ENCODE measurements at regions of chr6 and their contacts with region 1.

Region 1: GRCh38 chr6:73515204-73515655 is 5.6 kb downstream of the EEF1A1 start:
- DNase-seq: no peak
- ATAC-seq: peak; percentile 53
- H3K4me3 Mint-ChIP-seq: peak overlapping the region; percentile 72
- H3K27ac Mint-ChIP-seq: peak overlapping the region; percentile 80
- H3K4me1 Mint-ChIP-seq: peaks cover 70% of the 10 kb centered on the region
- H3K27me3 Mint-ChIP-seq: no peaks in the 10 kb centered on the region
- CTCF ChIP-seq: no peak

Region 2: DNA sequence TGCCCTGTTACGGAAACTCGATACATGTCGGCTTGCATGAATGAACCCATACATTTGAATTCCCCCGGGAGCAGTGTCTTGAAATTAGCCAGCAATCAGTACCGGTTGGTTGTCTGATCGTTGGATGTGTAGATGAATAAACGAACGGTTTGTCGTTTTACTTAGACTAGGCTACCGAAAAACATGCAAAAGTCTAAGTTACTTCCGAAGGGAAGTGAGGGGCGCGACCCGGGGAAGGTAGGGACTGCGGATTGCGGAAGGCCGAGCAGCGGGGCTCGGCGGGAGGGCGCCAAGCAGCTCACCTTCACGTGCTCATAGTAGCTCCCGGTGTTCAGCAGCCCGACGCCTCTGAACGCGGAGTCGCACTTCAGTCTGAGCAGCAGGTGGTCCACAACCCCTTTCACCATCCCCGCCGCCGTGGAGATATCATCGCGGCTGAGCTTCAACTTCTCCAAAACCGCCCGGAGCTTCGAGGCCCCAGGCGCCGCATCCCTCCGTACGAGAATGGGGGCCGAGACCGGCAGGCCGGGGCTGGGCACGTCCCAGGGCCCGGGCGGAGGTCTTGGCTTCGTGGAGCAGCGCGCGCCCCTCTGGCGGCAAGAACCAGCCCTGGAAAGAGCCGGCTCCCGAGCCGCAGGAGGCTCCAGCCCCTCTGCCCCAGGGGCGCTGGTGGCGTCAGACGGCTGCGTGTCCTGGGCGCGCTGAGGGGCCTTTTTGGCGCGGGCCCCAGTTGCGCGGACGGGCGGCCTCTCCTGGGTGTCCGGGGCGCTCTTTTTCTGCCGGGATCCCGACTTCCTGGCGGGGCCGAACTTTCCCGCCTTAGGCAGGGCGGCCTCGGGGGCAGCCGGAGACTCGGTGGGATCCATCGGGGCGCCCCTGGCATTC is 63.8 kb before region 1 on chr6:
- CTCF ChIA-PET with region 1: no interaction called
- POLR2A ChIA-PET with region 1: interaction called, 72 read pairs
- intact Hi-C with region 1: loop called (anchors 1 kb)
- DNase-seq: peak; percentile 54
- ATAC-seq: peak; percentile 59
- H3K4me3 Mint-ChIP-seq: peak overlapping the region; percentile 93
- H3K27ac Mint-ChIP-seq: peak overlapping the region; percentile 91
- H3K4me1 Mint-ChIP-seq: peaks cover 22% of the 10 kb centered on the region
- H3K27me3 Mint-ChIP-seq: no peaks in the 10 kb centered on the region
- CTCF ChIP-seq: no peak

Region 3: GRCh38 chr6:73481969-73482368 is 33.3 kb before region 1 on chr6:
- CTCF ChIA-PET with region 1: no interaction called
- POLR2A ChIA-PET with region 1: interaction called, 11 read pairs
- intact Hi-C with region 1: no loop called
- DNase-seq: no peak
- ATAC-seq: no peak
- H3K4me3 Mint-ChIP-seq: no peak overlapping the region
- H3K27ac Mint-ChIP-seq: no peak overlapping the region
- H3K4me1 Mint-ChIP-seq: no peaks in the 10 kb centered on the region
- H3K27me3 Mint-ChIP-seq: no peaks in the 10 kb centered on the region
- CTCF ChIP-seq: no peak

Region 4: GRCh38 chr6:73580247-73581149 is 65.3 kb after region 1 on chr6:
- CTCF ChIA-PET with region 1: interaction called, 14 read pairs
- POLR2A ChIA-PET with region 1: interaction called, 301 read pairs
- intact Hi-C with region 1: no loop called
- DNase-seq: peak; percentile 54
- ATAC-seq: peak; percentile 74
- H3K4me3 Mint-ChIP-seq: peak overlapping the region; percentile 80
- H3K27ac Mint-ChIP-seq: peak overlapping the region; percentile 98
- H3K4me1 Mint-ChIP-seq: peaks cover 48% of the 10 kb centered on the region
- H3K27me3 Mint-ChIP-seq: no peaks in the 10 kb centered on the region
- CTCF ChIP-seq: no peak

Region 5: DNA sequence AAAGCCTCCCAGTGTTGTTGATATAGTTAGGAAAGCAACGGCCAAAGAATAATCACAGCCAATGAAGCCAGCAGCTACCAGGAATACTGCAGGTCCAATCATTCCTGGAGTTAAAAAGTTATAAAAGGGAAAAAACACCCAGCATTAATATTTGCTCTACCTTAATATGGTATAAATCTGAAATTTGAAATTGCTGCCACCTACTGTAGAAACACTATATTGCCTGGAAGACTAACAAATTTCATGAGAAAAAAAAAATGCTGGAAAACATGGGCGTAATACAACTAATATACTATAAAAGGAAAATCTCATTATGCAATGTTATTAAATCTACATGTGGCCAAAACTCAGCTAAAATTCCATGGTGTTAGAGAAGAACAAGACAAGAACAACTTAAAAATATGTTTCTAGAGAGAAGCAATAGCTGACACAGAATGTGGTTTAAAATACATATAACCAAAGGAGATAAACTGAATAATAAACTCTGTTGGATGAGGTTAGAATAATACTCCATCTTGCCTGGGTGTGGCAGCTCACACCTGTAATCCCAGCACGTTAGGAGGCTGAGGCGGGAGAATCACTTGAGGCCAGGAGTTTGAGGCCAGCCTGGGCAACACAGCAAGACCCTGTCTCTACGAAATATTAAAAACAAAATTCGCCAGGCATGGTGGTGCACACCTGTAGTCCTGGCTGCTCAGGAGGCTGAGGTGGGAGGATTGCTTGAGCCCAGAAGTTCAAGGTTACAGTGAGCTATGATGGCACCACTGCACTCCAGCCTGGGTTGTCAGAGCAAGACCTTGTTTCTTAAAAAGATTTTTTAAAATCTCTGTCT is 95.4 kb after region 1 on chr6:
- CTCF ChIA-PET with region 1: interaction called, 64 read pairs
- POLR2A ChIA-PET with region 1: interaction called, 86 read pairs
- intact Hi-C with region 1: loop called (anchors 1 kb)
- DNase-seq: no peak
- ATAC-seq: peak; percentile 67
- H3K4me3 Mint-ChIP-seq: no peak overlapping the region
- H3K27ac Mint-ChIP-seq: no peak overlapping the region
- H3K4me1 Mint-ChIP-seq: peaks cover 5% of the 10 kb centered on the region
- H3K27me3 Mint-ChIP-seq: no peaks in the 10 kb centered on the region
- CTCF ChIP-seq: no peak

Region 6: DNA sequence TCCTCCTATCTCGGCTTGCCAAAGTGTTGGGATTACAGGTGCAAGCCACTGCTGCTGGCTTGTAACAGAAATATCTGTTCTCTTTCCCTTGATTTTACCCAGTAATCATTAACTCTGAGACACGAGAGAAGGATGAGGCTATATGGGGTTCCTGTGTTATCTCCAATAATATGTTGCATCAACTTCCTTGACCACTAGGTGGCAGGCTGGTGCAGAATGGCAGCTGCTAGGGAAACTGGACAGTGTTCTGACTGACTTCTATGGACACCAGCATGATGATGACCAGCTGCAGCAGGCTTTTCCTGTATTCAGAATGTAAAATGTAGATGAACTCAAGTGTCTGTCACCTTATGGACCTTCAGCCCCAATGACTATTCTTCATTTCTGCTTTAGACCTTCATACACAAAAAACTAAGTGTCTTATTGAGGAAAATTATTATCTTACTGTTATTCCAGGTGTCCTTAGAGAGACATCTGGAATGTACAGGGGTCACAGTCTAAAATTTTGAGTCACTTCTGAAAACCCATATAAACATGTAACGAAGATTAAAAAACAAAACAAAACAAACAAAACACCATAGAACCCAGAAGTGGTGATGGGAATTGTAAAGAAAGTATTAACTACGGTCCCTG is 160.4 kb after region 1 on chr6:
- CTCF ChIA-PET with region 1: no interaction called
- POLR2A ChIA-PET with region 1: no interaction called
- intact Hi-C with region 1: loop called (anchors 1 kb)
- DNase-seq: peak; percentile 20
- ATAC-seq: peak; percentile 83
- H3K4me3 Mint-ChIP-seq: no peak overlapping the region
- H3K27ac Mint-ChIP-seq: no peak overlapping the region
- H3K4me1 Mint-ChIP-seq: no peaks in the 10 kb centered on the region
- H3K27me3 Mint-ChIP-seq: peaks cover 11% of the 10 kb centered on the region
- CTCF ChIP-seq: peak; percentile 83

Region 7: GRCh38 chr6:74574794-74575193 is 1059.6 kb after region 1 on chr6:
- CTCF ChIA-PET with region 1: no interaction called
- POLR2A ChIA-PET with region 1: no interaction called
- intact Hi-C with region 1: no loop called
- DNase-seq: no peak
- ATAC-seq: no peak
- H3K4me3 Mint-ChIP-seq: no peak overlapping the region
- H3K27ac Mint-ChIP-seq: no peak overlapping the region
- H3K4me1 Mint-ChIP-seq: no peaks in the 10 kb centered on the region
- H3K27me3 Mint-ChIP-seq: no peaks in the 10 kb centered on the region
- CTCF ChIP-seq: no peak